Posterior vena cava (tissue), 2 donors: ENCODE measurements at regions of chr5 and their contacts with region 1.

Region 1: GRCh38 chr5:132419502-132420468 is 50.3 kb downstream of the SLC22A5 start:
- DNase-seq: peak; percentile 87

Region 2: DNA sequence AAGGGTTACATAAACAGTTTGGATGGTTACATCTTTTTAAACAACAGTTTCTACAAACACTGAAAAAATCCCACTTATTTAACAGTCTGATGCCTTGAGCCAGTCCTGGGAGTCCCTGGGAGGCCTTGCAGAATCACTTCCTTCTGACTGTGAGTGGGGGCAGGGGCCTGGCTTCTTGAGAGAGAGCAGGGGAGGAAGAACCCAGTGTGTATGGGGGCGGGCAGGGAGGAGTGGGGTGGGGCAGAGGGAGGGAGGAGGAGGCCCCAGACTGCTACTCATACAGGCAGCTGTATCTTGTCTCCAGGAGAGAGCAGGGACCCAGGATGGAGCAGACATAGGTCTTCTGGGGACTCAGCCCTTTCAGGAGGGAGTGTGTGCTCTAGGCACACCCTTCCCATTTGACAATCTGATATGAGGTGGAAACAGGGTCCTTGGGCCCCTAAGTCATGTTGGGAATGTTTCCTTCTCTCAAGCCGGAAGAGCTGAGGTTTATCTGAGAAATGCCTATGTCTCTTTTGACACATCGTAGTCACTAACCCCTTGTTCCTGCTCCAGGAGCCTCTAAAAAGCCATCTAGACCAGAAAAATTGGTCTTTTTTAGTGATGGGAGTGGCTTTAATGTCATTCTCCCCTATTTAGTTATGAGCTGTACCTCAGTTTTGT is 17.9 kb after region 1 on chr5:
- intact Hi-C with region 1: no loop called
- DNase-seq: peak; percentile 93

Region 3: DNA sequence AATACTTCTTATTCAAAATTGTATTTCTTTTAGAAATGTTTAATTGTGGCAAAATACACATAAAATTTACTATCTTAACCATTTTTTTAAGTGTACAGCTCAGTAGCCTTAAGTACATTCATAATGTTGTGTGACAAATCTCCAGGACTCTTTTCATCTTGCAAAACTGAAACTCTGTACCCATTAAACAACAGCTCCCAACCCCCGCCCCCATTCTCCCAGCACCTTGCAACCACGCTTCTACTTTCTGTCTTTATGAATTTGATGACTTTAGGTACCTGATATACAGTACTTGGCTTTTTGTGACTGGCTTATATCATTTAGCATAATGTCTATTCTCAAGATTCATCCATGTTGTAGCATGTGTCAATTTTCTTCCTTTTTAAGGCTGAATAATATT is 126.3 kb after region 1 on chr5:
- intact Hi-C with region 1: loop called in 1 of 2 experiments (anchors 5 kb)
- DNase-seq: no peak